ENCODE measurements at regions of chr11 and their contacts with region 1.

Region 1: DNA sequence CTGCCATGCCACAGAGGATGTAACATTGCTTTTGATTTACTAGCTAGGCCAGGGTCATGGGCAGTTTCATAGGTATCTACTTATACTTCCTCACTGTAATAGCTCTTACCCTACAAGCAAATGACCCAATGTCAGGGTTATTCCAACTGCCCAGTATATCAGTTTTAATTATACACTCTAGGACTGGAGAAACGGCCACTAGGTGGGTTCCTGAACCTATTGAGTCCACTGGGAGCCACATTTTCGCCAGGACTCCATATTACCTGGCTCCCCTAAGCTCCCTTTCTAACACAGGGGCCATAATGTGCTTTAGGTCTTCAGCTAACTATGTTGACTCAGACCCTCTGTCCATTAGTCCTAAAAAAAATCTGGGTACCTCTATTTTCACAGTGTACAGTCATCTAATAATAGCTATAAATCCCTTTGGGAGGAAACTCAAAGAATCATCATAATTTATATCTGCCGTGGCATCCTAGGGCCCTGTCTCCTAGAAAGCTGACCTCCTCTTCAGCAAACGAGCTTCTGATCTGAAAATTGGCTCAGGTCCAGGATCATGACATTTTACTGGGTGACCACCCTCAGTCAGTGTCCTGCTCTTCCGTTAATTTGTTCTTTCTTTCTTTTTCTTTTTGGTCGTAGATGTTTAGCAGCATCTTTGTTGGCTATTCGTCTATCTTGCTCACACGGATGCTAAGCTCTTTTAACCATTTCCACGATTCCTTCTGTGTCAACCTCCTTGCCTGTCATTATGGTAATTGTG is 244.3 kb downstream of the FAM76B start:
- DNase-seq: no peak
- H3K4me3 Mint-ChIP-seq: no peak overlapping the region
- H3K27ac Mint-ChIP-seq: no peak overlapping the region
- H3K4me1 Mint-ChIP-seq: peaks cover 26% of the 10 kb centered on the region
- H3K27me3 Mint-ChIP-seq: no peaks in the 10 kb centered on the region

Region 2: DNA sequence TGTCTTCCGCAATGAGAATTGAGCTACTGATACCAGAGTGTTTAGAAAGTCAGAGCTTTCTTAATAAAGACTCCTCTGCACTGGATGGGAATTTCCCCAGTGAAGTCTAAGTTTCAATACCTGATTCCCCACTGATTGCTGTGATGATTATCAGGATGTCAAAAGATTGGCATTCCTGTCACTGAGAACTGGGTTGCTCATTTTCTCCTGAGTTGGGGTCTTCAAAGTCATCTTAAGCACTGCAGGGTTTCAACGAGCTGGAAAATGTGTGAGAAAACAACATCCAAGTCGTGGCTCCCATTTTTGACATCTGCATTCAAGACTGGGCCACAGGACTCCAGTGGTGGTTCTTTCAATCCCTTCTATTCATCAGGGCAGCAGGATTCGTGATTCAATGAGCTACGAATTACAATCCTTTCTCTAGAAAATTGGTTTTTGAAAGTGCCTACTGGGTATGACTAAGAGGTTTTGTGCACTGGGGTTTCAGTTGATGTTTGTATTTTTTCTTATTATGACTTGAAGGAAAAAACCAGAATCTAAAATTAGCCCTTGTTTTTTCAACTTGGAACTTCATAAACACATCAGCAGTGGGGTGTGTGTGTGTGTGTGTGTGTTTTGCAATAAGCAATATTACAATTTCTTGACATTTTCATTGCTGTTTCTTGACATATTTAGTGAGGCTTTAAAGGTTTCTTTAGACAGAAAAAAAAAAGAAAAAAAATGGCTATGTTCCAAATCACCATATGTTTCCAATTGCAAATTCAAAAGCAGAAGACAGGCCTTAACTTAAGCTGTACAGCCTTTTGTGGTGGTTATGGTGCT is 11.3 kb after region 1 on chr11:
- CTCF ChIA-PET with region 1: interaction called, 13 read pairs
- POLR2A ChIA-PET with region 1: no interaction called
- DNase-seq: no peak
- H3K4me3 Mint-ChIP-seq: no peak overlapping the region
- H3K27ac Mint-ChIP-seq: no peak overlapping the region
- H3K4me1 Mint-ChIP-seq: peaks cover 29% of the 10 kb centered on the region
- H3K27me3 Mint-ChIP-seq: no peaks in the 10 kb centered on the region

Region 3: DNA sequence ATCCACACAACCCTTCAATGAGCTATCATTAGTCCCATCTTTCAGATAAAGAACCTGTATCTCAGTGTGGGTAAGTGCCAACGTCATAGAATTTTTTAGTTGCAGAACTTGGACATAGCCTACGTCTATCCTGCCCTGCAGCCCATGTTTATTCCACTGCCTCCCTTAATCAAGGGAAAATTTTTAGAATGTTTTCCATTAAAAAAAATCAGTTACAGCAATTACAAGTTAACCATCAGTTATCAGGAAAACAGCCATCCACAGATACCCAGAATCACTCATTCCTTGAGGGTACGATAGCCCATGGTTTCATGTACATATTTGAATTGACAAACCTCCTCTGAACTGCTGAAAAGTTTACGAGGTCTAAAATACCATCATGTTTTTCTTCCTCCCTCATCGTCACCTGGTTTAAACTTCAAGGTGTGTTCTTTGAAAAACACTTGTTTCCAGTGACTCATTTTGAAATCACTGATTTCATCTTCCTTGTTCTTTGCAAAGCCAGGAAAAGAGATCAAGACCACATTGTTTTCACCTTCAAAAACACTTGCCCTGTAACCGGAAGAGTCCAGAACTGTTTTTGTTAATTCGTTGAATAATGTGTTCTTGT is 143.4 kb after region 1 on chr11:
- CTCF ChIA-PET with region 1: no interaction called
- POLR2A ChIA-PET with region 1: no interaction called
- DNase-seq: peak; percentile 48
- H3K4me3 Mint-ChIP-seq: peak overlapping the region; percentile 7
- H3K27ac Mint-ChIP-seq: no peak overlapping the region
- H3K4me1 Mint-ChIP-seq: peaks cover 20% of the 10 kb centered on the region
- H3K27me3 Mint-ChIP-seq: no peaks in the 10 kb centered on the region

Measured in activated CD4-positive, alpha-beta T cell treated with anti-CD3 and anti-CD28 coated beads, Interleukin-2, amount 10 ng/mL, durations not matched to agents 7 days and 5 days (primary cell).